ENCODE measurements at regions of chr11 and their contacts with region 1.

Region 1: GRCh38 chr11:34174412-34175041 is 69.1 kb downstream of the NAT10 start:
- DNase-seq: peak; percentile 91
- ATAC-seq: peak; percentile 100
- H3K4me3 Mint-ChIP-seq: peak overlapping the region; percentile 15
- H3K27ac Mint-ChIP-seq: no peak overlapping the region
- H3K4me1 Mint-ChIP-seq: peaks cover 17% of the 10 kb centered on the region
- H3K27me3 Mint-ChIP-seq: peaks cover 4% of the 10 kb centered on the region
- CTCF ChIP-seq: peak; percentile 91

Region 2: DNA sequence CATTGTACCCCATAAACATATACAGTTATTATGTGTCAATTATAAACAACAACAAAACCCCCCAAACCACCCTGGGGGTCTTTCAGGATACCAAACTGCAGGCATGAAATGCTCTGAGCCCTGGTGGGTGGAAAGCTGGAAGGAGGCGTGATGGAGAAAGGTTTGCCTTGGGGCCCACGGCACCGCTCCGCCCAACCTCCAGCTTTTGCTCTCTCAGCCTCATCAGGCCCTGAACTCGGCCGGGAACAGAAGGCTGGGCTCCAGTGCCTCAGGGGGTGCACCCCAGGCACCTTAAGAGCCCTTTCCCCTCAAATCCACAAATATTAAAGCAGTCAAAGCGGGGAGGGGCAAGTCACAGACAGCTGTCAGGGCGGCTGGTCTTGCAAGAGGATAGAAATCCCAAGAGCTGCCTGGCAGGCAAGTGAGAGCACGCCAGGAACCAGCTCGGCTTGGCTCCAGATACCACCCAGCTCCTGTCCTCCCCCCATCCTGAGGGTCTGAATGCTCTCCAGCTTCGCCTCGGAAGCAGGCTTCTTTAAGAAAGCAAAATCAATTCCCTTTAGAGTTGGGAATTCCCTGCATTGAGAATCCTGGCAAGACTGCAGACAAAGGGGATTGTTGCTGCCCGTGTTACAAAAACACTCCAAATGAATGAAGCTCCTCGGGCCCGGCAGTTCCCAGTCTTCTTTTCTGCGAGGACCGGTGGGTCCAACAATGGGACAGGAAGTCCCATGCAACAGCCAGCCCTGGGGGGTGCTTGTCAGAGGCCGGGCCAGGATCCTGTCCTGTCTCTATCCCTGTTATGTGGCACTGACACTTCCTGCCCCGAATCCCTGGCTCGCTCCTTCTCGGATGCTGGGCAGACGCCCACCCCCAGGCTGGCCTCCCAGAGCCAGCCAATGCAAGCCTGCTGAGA is 11.7 kb after region 1 on chr11:
- CTCF ChIA-PET with region 1: interaction called, 29 read pairs
- POLR2A ChIA-PET with region 1: no interaction called
- intact Hi-C with region 1: no loop called
- DNase-seq: no peak
- ATAC-seq: no peak
- H3K4me3 Mint-ChIP-seq: no peak overlapping the region
- H3K27ac Mint-ChIP-seq: no peak overlapping the region
- H3K4me1 Mint-ChIP-seq: peaks cover 20% of the 10 kb centered on the region
- H3K27me3 Mint-ChIP-seq: no peaks in the 10 kb centered on the region
- CTCF ChIP-seq: no peak

Region 3: DNA sequence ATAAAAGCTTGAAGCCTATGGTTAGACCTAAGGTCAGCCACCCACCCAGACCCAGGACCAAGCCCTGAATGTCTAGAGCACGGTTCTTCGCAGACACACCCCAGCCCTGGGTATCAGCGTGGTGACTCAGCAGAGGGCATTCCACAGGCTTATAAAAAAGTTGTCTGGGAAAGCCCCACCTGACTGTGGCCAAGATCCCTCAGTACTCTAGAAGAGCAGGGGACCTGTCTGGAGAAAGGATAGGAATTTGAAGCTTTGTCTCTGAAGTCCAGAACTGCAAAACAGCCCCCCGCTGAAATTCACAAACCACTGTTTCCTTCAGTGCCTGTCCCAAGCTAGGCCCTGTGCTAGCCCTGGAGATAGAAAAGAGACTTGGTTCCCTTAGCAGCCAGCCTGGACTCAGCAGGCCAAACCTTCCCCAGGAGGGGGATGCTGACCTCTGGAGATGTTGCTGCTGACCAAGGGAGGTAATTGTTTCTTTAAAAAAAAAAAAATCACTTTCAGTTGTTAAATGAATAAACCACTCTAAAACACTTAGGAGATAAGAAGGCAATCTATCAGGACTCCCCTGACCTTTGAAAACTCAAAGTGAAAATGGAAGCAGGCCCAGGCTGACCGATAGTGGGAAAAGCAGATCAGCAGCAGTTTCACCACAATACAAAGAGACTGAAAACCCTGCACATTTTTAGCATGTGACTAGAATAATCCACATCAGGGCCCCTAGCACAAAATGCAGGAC is 69.4 kb after region 1 on chr11:
- CTCF ChIA-PET with region 1: interaction called, 50 read pairs
- POLR2A ChIA-PET with region 1: interaction called, 3 read pairs
- intact Hi-C with region 1: loop called (anchors 5 kb)
- DNase-seq: peak; percentile 85
- ATAC-seq: peak; percentile 64
- H3K4me3 Mint-ChIP-seq: peak overlapping the region; percentile 21
- H3K27ac Mint-ChIP-seq: peak overlapping the region; percentile 77
- H3K4me1 Mint-ChIP-seq: peaks cover 92% of the 10 kb centered on the region
- H3K27me3 Mint-ChIP-seq: no peaks in the 10 kb centered on the region
- CTCF ChIP-seq: no peak

Region 4: GRCh38 chr11:34351687-34352469 is 177.4 kb after region 1 on chr11:
- CTCF ChIA-PET with region 1: interaction called, 85 read pairs
- POLR2A ChIA-PET with region 1: interaction called, 11 read pairs
- intact Hi-C with region 1: no loop called
- DNase-seq: no peak
- ATAC-seq: no peak
- H3K4me3 Mint-ChIP-seq: no peak overlapping the region
- H3K27ac Mint-ChIP-seq: no peak overlapping the region
- H3K4me1 Mint-ChIP-seq: peaks cover 20% of the 10 kb centered on the region
- H3K27me3 Mint-ChIP-seq: peaks cover 28% of the 10 kb centered on the region
- CTCF ChIP-seq: no peak

Region 5: DNA sequence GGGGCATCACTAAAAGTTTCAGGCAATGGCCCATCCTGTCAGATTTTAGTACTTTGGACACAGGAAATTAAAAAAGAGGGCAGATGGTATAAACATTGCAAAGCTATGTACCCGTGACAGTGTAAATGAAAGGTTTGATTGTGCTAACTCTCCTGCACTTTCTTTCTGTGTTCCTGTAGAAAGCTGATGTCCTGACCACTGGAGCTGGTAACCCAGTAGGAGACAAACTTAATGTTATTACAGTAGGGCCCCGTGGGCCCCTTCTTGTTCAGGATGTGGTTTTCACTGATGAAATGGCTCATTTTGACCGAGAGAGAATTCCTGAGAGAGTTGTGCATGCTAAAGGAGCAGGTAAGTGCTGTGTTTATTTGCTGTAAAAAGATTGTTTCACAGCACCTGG is 274.5 kb after region 1 on chr11:
- CTCF ChIA-PET with region 1: interaction called, 11 read pairs
- POLR2A ChIA-PET with region 1: no interaction called
- intact Hi-C with region 1: no loop called
- DNase-seq: peak; percentile 48
- ATAC-seq: peak; percentile 39
- H3K4me3 Mint-ChIP-seq: no peak overlapping the region
- H3K27ac Mint-ChIP-seq: peak overlapping the region; percentile 40
- H3K4me1 Mint-ChIP-seq: peaks cover 32% of the 10 kb centered on the region
- H3K27me3 Mint-ChIP-seq: no peaks in the 10 kb centered on the region
- CTCF ChIP-seq: no peak